ENCODE measurements at regions of chr1 and their contacts with region 1.

Region 1: GRCh38 chr1:205255941-205256780 is 28.4 kb downstream of the TMCC2 start:
- DNase-seq: peak; percentile 76 to 82 (median 80)
- H3K4me3 ChIP-seq: no peak overlapping the region
- H3K4me3 Mint-ChIP-seq: no peak overlapping the region
- H3K27ac ChIP-seq: no peak overlapping the region
- H3K27ac Mint-ChIP-seq: peak overlapping the region in 1 of 7 donors; percentile 46
- H3K4me1 ChIP-seq: no peaks in the 10 kb centered on the region
- H3K4me1 Mint-ChIP-seq: peaks cover 0 to 2% (median 0%) of the 10 kb centered on the region in 4 donors
- H3K27me3 ChIP-seq: no peaks in the 10 kb centered on the region
- H3K27me3 Mint-ChIP-seq: peaks cover 0 to 5% of the 10 kb centered on the region in 2 donors

Region 2: DNA sequence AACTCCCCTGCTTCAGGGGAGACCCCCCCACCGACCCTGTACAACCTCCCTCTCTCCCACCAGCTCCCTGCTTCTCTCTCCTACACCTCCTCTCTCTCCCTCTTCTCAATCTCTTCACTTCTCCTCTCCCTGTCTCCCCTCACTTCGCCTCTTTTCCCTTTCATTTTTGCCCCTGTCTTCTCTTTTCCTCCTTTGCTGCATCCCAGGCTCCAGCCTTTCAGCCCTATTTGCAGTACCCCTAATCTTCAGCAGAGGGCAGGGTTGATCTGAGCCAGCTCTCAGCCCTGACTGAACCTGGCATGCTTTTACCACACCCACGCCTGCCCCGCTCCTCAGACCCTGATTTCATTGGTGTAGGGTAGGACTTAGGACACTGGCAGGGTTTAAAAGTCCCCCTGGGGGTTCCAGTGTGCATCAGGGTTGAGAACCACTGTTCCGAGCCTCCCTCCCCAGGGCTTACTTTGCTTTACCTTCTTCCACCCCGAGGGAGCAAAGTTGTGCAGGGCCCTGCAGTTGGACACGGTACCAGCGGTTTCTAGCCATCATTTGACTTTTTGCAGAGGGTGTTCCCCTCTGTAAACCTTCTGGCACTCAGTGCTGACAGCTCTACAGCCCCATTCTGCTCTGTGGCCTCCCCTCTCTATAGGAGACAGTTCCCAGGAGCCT is 280.5 kb before region 1 on chr1:
- CTCF ChIA-PET with region 1: interaction called, 73 read pairs
- POLR2A ChIA-PET with region 1: no interaction called
- intact Hi-C with region 1: no loop called
- DNase-seq: peak in 4 of 5 donors; percentile 27 to 47 (median 31)
- H3K4me3 ChIP-seq: no peak overlapping the region
- H3K4me3 Mint-ChIP-seq: no peak overlapping the region
- H3K27ac ChIP-seq: no peak overlapping the region
- H3K27ac Mint-ChIP-seq: no peak overlapping the region
- H3K4me1 ChIP-seq: no peaks in the 10 kb centered on the region
- H3K4me1 Mint-ChIP-seq: peaks cover 0 to 3% (median 0%) of the 10 kb centered on the region in 4 donors
- H3K27me3 ChIP-seq: no peaks in the 10 kb centered on the region
- H3K27me3 Mint-ChIP-seq: peaks cover 15 to 37% of the 10 kb centered on the region in 2 donors

Region 3: GRCh38 chr1:205061665-205062069 is 194.5 kb before region 1 on chr1:
- CTCF ChIA-PET with region 1: interaction called, 11 read pairs
- POLR2A ChIA-PET with region 1: no interaction called
- intact Hi-C with region 1: no loop called
- DNase-seq: peak; percentile 59 to 66 (median 63)
- H3K4me3 ChIP-seq: no peak overlapping the region
- H3K4me3 Mint-ChIP-seq: peak overlapping the region in 1 of 8 donors; percentile 36
- H3K27ac ChIP-seq: no peak overlapping the region
- H3K27ac Mint-ChIP-seq: no peak overlapping the region
- H3K4me1 ChIP-seq: no peaks in the 10 kb centered on the region
- H3K4me1 Mint-ChIP-seq: peaks cover 0 to 2% (median 0%) of the 10 kb centered on the region in 4 donors
- H3K27me3 ChIP-seq: no peaks in the 10 kb centered on the region
- H3K27me3 Mint-ChIP-seq: peaks cover 0 to 1% of the 10 kb centered on the region in 2 donors

Region 4: DNA sequence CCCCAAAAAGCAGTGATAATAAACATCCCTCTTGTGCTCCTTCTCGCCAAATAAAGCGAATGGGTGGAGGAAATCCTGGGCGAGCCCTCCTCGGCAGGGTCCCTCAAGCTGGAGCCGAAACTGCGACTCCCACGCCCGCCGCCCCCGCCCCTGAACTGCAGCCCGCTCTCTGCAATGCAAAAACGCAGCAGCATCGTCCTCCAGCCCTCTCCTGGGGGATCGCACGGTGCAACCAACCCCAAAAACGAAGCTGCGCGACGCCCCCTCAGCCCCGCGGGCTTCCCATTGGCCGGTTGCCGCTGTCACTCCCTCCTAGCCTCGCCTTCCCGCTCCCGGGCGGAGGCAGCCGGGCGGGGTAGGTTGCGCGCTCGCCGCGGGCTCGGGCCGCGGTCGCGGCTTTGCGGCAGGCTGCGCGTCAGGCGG is 28.6 kb before region 1 on chr1 and contains the start of gene TMCC2:
- CTCF ChIA-PET with region 1: interaction called, 191 read pairs
- POLR2A ChIA-PET with region 1: interaction called, 33 read pairs
- intact Hi-C with region 1: loop called (anchors 1 kb)
- DNase-seq: peak; percentile 67 to 79 (median 70)
- H3K4me3 ChIP-seq: peak within 1 kb of the TSS; percentile 54 to 57
- H3K4me3 Mint-ChIP-seq: peak within 1 kb of the TSS; percentile 88 to 99 (median 94)
- H3K27ac ChIP-seq: no peak within 1 kb of the TSS
- H3K27ac Mint-ChIP-seq: peak within 1 kb of the TSS; percentile 53 to 97 (median 85)
- H3K4me1 ChIP-seq: peaks cover 25% of the 10 kb centered on the region
- H3K4me1 Mint-ChIP-seq: peaks cover 14 to 33% (median 23%) of the 10 kb centered on the region in 4 donors
- H3K27me3 ChIP-seq: peaks cover 5% of the 10 kb centered on the region
- H3K27me3 Mint-ChIP-seq: peaks cover 8 to 18% of the 10 kb centered on the region in 2 donors
- total RNA-seq, gene TMCC2: 0.90 to 1.2 TPM

Measured in CD4-positive, alpha-beta memory T cell (primary cell).